ENCODE measurements at regions of chr15 and their contacts with region 1.

Region 1: DNA sequence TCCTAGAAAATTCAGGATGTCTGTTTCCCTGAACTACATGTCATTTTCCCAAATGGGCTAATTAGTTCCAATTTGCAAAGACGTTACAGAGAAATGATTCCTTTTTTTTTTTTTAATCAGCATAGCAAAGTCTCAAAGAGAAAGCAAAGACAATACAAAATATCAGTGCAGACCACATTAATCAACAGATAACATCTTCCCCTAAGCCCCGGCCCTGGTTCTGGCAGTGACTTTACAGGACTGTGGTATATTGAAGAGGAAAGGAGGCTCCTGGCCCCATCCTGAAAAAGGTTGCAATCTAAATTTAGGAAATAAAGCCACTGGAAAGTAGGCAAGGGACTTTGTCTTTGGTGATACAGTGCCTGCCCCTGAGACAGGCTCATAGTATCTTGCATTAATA is 836.5 kb downstream of the NTRK3 start:
- DNase-seq: no peak
- ATAC-seq: no peak
- H3K4me3 ChIP-seq: no peak overlapping the region
- H3K27ac ChIP-seq: no peak overlapping the region
- H3K4me1 ChIP-seq: no peaks in the 10 kb centered on the region
- H3K27me3 ChIP-seq: no peaks in the 10 kb centered on the region
- CTCF ChIP-seq: no peak
- POLR2A ChIP-seq: no peak
- RAD21 ChIP-seq: no peak

Region 2: GRCh38 chr15:86959254-86959653 is 460.8 kb before region 1 on chr15:
- CTCF ChIA-PET with region 1: no interaction called
- POLR2A ChIA-PET with region 1: no interaction called
- RAD21 ChIA-PET with region 1: no interaction called
- intact Hi-C with region 1: loop called (anchors 10 kb)
- DNase-seq: no peak
- ATAC-seq: no peak
- H3K4me3 ChIP-seq: no peak overlapping the region
- H3K27ac ChIP-seq: no peak overlapping the region
- H3K4me1 ChIP-seq: no peaks in the 10 kb centered on the region
- H3K27me3 ChIP-seq: no peaks in the 10 kb centered on the region
- CTCF ChIP-seq: no peak
- POLR2A ChIP-seq: no peak
- RAD21 ChIP-seq: no peak

Measured in HCT116 (cell line).